Pancreas (tissue), 10 donors: ENCODE measurements at regions of chr3 and their contacts with region 1.

Region 1: DNA sequence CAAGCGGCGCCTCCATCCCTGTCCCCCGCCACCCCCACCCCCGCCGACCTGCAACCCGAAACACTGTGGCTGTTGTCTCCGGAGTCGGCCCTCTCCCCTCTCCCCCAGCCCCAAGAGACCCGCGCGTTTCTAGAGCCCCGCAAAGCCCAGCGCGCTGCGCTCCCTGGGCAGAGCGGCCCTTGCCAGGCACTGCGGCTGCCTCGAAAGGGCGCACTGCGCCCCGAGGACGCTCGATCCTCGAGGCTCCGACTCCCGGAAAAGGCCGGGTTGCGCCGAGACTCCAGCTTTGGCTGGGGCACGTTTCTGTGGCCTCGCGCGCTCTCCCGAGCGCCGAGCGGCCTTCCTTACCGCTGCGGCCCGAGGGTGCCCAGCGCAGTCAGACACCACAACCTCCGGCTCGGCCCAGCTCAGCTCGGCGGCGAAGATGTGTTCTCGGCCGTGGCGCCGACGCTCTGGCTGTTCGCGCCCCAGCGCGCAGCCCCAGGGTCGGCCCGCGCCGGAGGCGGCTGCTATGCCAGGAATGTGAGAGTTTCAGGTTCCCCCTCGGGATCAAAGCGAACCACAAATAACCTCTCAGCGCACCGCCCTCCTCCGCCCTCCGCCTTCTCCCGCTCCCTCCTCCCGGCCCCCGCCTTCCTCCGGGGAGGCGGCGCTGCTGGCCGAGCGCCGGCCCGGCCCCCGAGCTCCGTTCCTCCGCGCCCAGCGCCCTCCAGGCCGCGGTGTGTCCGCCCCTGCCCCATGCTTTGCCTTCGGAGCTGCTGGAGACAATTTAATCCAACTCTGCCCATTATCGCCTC is at the start of gene AMOTL2:
- DNase-seq: peak; percentile 84 to 88 (median 86)
- ATAC-seq: peak; percentile 75 to 83 (median 81)
- H3K4me3 ChIP-seq: peak within 1 kb of the TSS; percentile 47 to 74 (median 70)
- H3K27ac ChIP-seq: peak within 1 kb of the TSS; percentile 95 to 99 (median 97)
- H3K4me1 ChIP-seq: peaks cover 0 to 4% (median 4%) of the 10 kb centered on the region in 3 donors
- H3K27me3 ChIP-seq: no peaks in the 10 kb centered on the region
- CTCF ChIP-seq: no peak
- total RNA-seq, gene AMOTL2: 25.3 to 35.7 (median 32.4) TPM

Region 2: DNA sequence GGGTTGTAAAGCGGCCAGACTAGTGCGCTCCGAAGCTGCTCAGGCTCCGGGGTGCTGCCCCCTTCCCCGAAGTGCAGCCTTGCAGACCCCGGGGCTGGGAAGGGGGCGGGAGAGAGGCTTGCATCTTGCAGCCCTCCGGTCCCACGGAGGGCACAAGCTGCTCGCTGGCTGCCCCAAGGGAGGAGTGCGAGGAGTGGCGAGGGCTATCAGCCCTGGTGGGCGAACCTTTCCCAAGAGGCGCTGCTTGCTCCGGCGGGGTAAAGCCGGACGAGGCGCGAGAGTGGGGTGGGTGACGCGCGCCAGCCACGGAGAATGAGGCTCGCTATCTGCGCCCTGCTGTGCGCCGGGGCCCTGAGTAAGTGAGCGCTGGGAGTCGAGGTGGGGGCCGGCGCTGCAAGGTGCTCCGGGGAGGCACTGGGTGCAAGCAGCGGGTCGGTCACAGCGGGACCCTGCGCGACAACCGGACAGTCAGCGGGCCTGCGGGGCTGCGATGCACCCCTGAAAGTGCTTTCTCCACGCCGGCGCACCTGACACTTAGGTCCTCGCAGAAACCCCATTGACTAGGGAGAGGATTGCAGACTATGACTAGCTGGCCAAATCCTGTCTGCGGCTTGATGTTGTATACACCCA is 699.8 kb before region 1 on chr3:
- intact Hi-C with region 1: no loop called
- DNase-seq: peak in 1 of 6 donors; percentile 61
- ATAC-seq: no peak
- H3K4me3 ChIP-seq: no peak overlapping the region
- H3K27ac ChIP-seq: no peak overlapping the region
- H3K4me1 ChIP-seq: peaks cover 11 to 20% (median 13%) of the 10 kb centered on the region in 3 donors
- H3K27me3 ChIP-seq: no peaks in the 10 kb centered on the region
- CTCF ChIP-seq: no peak

Region 3: DNA sequence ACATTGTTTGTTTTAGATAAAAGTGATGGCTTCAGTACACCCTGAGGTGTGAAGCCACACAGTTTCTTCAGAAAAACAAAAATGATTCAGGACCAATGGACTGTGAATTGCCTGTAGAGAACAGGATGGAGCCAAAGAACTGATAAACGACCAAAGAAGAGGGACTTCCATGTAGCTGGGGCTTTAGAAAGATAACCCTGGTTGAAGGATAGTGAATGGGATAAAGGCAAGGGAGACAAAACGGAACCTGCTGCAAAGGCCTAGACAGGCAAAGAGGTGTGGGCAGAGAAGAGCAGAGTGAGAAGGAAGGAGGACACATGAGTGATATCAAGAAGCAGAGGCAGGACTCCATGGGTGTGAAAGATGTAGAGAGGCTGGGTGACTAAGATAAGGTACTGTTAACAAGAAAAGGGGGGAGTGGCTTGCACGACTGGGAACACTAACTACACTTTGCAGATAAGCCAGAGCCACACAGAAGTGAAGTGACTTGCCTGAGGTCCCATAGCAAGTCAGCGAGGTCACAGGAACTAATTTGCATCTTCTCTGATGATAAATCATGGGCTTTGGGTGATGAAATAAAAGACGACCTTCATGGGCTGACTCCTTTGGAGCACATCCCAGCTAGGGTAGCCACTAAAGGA is 522.8 kb before region 1 on chr3:
- intact Hi-C with region 1: no loop called
- DNase-seq: no peak
- ATAC-seq: no peak
- H3K4me3 ChIP-seq: no peak overlapping the region
- H3K27ac ChIP-seq: no peak overlapping the region
- H3K4me1 ChIP-seq: no peaks in the 10 kb centered on the region
- H3K27me3 ChIP-seq: no peaks in the 10 kb centered on the region
- CTCF ChIP-seq: no peak

Region 4: DNA sequence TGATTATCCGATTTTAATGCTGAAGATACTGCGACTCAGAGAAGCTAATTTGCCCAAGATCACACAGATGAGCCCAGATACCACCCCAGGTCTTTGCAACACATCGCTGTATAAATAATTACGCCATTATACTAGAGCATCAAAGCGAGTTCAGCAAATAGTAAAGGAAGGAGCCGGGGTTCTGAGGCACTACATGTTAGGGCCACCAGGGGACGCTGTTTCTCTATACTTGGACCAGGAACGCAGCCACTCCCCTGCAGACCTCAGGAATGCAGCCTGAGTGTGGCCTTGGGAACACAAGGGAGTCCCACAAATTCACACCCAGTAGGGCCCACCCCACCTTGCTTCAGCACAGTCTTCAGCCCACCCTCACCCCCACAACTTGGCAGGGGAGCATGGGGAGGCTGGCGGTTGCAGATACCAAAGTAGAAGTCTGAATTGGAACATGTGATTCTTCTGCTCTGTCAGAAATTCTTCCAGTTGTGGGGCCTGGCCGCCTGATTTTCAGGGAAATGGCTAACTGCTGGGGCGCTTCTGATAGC is 65.8 kb before region 1 on chr3:
- intact Hi-C with region 1: loop called in 1 of 3 experiments (anchors 5 kb)
- DNase-seq: peak; percentile 63 to 90 (median 80)
- ATAC-seq: peak; percentile 36 to 84 (median 69)
- H3K4me3 ChIP-seq: no peak overlapping the region
- H3K27ac ChIP-seq: peak overlapping the region; percentile 17 to 54 (median 42)
- H3K4me1 ChIP-seq: peaks cover 0 to 8% (median 8%) of the 10 kb centered on the region in 3 donors
- H3K27me3 ChIP-seq: no peaks in the 10 kb centered on the region
- CTCF ChIP-seq: peak; percentile 88 to 98 (median 96)

Region 5: DNA sequence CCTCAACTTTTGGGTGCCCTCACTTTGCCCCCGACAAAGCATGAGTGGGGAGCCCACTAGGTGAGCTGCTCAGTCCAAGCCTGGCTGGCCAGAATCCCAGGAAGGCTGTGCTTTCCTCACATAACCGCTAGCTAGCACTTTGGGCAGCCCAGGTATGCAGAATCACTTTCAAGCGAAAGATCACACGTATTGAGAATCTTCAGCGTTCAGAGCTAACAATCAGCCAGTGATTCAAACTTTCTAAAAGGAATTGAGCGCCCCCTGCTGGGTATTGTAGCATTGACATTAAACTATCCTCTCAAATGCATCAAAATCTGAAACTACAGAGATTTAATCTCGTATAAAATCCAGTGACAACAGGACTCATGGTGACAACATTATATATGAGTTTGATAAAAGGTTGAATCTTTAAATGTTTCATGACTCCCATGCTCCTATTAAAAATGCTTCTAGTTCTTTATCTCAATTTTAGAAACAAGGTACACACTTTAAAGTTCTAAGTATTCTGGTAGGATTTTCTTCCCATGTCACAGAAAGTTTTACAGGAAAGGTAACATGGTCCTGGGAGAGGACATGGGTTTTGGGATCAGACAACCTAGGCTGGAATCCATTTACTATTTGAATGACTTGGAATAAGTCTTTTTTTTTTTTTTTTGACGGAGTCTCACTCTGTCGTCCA is 99.8 kb after region 1 on chr3:
- intact Hi-C with region 1: loop called in 2 of 3 experiments (anchors 10 kb)
- DNase-seq: peak in 5 of 6 donors; percentile 52 to 78 (median 63)
- ATAC-seq: peak; percentile 64 to 91 (median 82)
- H3K4me3 ChIP-seq: no peak overlapping the region
- H3K27ac ChIP-seq: no peak overlapping the region
- H3K4me1 ChIP-seq: peaks cover 0 to 3% (median 0%) of the 10 kb centered on the region in 3 donors
- H3K27me3 ChIP-seq: no peaks in the 10 kb centered on the region
- CTCF ChIP-seq: peak; percentile 65 to 78 (median 68)